ENCODE measurements at regions of chr10 and their contacts with region 1.

Region 1: DNA sequence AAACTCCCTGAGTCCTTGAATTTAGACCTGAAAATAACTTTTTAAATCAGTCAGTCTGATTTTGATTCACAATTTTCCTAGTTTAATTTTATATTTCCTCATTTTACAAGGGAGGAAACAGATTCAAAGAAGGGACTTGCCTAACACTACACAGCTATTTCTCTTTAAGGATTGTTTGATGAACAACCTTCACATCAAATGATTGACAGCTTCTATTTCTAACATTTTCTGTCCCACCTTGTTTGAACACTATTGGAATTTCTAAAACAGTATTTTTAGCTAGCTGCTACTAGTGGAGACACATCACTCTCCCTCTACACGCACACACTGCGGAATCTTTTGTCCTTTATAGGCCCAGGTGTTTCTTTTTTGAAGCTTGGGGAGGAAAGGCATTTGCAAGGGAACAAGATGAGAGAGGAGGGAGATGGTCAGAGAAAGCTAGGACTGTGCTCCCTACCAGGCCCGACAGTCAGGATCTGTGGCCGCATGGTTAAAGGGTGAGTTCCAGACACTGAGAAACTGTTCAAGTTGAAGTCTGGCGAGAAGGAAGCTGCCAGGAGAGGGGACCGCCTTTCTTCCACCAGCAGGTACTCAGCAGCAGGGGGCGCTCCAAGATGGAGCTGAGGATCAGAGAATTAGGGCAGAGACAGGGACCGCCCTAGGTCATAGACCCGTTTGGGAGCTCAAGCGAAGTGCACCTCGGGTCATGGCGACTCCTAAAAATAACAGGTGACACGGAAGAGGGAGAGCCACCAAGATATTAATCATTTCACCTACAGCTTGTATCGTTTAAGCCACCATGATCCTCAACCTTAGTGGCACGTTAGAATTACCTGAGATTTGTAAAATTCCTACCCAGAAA is 49.7 kb downstream of the DNAJC12 start:
- DNase-seq: peak; percentile 80
- H3K4me3 Mint-ChIP-seq: no peak overlapping the region
- H3K27ac Mint-ChIP-seq: no peak overlapping the region
- H3K4me1 Mint-ChIP-seq: peaks cover 53% of the 10 kb centered on the region
- H3K27me3 Mint-ChIP-seq: no peaks in the 10 kb centered on the region

Region 2: DNA sequence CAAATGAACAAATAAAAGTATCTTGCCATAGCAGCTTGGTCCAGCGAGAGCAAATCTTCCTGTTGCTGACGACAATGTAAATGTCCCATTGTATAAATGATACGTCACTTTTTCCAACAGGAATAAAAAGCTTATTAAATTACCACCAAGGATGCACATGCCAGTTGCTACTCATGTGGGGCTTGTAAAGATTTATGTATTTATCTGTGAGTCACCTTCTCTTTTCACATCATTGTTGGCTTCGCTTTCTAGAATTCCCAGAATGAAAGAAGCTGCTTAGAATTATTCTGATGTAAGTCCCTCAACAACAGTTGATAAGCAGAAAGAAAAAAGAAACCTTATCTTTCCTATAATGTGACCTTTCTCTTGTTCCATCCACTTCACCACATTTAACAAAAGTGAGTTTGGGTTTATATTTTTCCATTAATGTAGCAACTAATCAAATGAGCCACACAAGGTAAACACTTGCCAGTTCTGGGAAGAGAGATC is 27.4 kb after region 1 on chr10:
- CTCF ChIA-PET with region 1: interaction called, 11 read pairs
- DNase-seq: no peak
- H3K4me3 Mint-ChIP-seq: no peak overlapping the region
- H3K27ac Mint-ChIP-seq: no peak overlapping the region
- H3K4me1 Mint-ChIP-seq: peaks cover 10% of the 10 kb centered on the region
- H3K27me3 Mint-ChIP-seq: no peaks in the 10 kb centered on the region

Region 3: DNA sequence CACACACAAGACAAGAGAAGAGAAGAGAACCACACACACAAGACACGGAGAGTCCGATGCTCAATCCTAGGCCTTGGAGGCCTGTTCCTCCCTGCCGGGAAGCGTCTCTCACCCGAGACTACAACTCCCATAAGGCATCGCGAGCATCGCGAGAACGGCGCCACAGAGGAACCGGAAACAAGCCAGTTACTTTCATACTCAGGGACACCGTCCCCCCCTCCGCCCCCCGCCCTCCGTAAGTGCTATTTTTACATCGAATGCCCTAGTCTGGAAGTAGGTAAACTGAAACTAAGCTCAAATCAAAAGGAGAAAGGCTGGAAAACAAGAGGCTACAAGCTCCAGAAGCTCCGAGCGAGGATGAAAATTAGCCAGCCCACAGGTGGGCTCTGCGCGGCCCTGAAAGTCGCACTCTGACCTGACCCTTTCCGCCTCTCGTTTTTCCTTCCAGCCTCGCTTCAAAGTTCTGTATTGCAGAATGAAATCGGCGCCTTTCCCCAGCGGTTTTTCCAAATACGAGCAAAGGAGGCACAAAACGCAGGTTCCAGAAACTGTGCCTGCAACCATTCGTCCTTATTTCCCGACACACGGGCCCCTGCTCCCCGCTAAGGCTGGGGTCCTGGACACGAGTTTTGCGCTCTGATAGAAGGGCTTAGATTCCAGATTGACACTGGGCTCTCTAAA is 61.2 kb after region 1 on chr10:
- CTCF ChIA-PET with region 1: interaction called, 64 read pairs
- DNase-seq: peak; percentile 97
- H3K4me3 Mint-ChIP-seq: peak overlapping the region; percentile 84
- H3K27ac Mint-ChIP-seq: peak overlapping the region; percentile 91
- H3K4me1 Mint-ChIP-seq: peaks cover 19% of the 10 kb centered on the region
- H3K27me3 Mint-ChIP-seq: no peaks in the 10 kb centered on the region

Region 4: DNA sequence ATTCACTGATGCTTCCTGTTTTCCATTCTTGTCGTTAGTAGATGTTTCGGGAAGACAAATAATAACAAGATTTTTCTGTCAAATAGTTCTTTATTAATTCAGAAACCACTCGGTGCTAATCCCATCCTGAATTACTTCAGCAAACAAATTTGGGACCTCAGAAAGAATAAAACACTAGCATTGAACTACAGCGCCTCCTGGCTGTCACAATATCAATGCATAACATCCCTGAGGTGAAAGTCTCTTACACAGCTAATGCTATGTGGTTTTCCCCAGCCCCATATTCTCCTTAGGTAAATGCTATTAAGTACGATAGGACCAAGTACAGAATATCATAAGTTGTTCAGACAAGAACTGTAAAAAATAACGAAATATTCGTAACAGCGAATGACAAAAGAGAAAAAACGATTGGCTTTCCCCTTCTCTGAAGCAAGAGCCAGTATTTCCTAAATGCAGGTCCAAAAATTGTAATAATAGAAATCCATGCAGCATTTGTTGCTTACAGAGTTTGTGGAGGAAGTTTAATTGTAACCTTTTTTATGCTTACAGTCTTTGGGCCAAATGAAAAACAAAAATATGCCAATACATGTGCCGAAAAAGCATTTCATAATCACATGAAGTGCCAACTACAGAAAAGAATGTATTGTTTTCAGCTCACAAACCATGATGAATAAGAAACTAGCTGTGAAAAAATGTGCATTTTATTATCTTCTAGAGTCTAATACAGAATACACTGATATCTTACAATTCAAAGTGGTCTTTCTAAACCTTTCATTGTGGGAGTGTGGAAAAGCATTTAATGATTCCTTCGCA is 368.3 kb after region 1 on chr10:
- CTCF ChIA-PET with region 1: interaction called, 84 read pairs
- DNase-seq: peak; percentile 75
- H3K4me3 Mint-ChIP-seq: no peak overlapping the region
- H3K27ac Mint-ChIP-seq: no peak overlapping the region
- H3K4me1 Mint-ChIP-seq: no peaks in the 10 kb centered on the region
- H3K27me3 Mint-ChIP-seq: peaks cover 3% of the 10 kb centered on the region

Region 5: GRCh38 chr10:68348265-68348741 is 560.0 kb after region 1 on chr10:
- CTCF ChIA-PET with region 1: interaction called, 10 read pairs
- DNase-seq: peak; percentile 60
- H3K4me3 Mint-ChIP-seq: no peak overlapping the region
- H3K27ac Mint-ChIP-seq: no peak overlapping the region
- H3K4me1 Mint-ChIP-seq: no peaks in the 10 kb centered on the region
- H3K27me3 Mint-ChIP-seq: no peaks in the 10 kb centered on the region

Measured in activated naive CD4-positive, alpha-beta T cell treated with anti-CD3 and anti-CD28 coated beads, Interleukin-2, amount 10 ng/mL, durations not matched to agents 7 days and 5 days (primary cell).